ENCODE measurements at regions of chr19 and their contacts with region 1.

Region 1: DNA sequence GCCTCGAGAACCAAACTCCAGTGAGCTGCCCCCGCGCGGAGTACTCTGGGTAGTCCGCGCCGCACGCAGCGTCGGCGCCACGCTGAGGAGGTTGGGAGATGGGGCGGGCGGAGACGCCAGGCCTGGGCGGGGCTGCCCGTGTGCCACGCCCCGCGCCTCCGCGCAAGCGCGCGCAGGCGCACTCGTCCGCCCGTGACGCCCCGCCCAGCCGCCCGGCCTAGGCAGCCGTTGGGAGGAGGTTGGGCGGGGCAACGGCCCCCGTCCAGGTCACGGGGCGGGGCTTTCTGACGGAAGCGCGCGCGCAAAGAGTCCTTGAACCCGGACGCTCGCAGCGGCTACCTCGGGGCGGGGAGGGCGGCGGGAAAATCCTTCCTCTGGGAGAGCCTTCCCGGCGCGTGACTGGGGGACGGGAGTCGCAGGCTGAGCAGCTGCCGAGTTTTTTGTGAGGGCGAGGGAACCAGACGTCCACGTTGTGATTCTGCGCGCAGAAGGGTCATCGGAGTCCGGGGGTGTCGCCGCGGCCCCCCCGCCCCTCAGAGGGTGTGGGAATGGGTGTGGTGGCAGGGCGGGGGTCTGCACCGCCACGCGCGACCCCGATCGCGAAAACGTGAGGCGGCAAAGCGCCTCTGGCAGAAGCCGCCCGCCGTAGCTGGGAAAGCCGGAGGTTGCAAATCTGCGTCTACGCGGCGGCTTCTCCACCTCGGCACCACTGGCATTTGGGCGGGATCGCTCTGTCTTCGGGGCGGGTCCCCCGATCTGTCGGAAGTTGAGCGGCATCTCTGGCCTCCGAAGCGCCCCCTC is at the start of gene MED26:
- DNase-seq: peak; percentile 93 to 94
- H3K4me3 ChIP-seq: peak within 1 kb of the TSS; percentile 92 to 99 (median 96)
- H3K27ac ChIP-seq: peak within 1 kb of the TSS; percentile 79 to 95 (median 93)
- H3K4me1 ChIP-seq: peaks cover 17 to 20% of the 10 kb centered on the region in 2 donors
- H3K27me3 ChIP-seq: no peaks in the 10 kb centered on the region
- CTCF ChIP-seq: peak in 1 of 6 experiments; percentile 13
- POLR2A ChIP-seq: peak in 1 of 2 donors; percentile 85
- total RNA-seq, gene MED26: 4.4 to 12.9 (median 8.4) TPM

Region 2: GRCh38 chr19:16572332-16573211 is 55.8 kb before region 1 on chr19 and contains the start of gene SLC35E1:
- intact Hi-C with region 1: loop called (anchors 5 kb)
- DNase-seq: peak; percentile 97
- H3K4me3 ChIP-seq: peak within 1 kb of the TSS; percentile 75 to 83 (median 81)
- H3K27ac ChIP-seq: peak within 1 kb of the TSS; percentile 56 to 69 (median 68)
- H3K4me1 ChIP-seq: peaks cover 24 to 25% of the 10 kb centered on the region in 2 donors
- H3K27me3 ChIP-seq: no peaks in the 10 kb centered on the region
- CTCF ChIP-seq: no peak
- POLR2A ChIP-seq: peak in 1 of 2 donors; percentile 87
- total RNA-seq, gene SLC35E1: 33.3 to 49.3 (median 38.6) TPM

Measured in thyroid gland (tissue), 4 donors.